Heart right ventricle (tissue), 16 donors: ENCODE measurements at regions of chrX and their contacts with region 1.

Region 1: GRCh38 chrX:39814391-39814790 is 283.4 kb downstream of the BCOR start:
- DNase-seq: no peak
- ATAC-seq: peak in 5 of 8 donors; percentile 38 to 57 (median 41)
- H3K4me3 ChIP-seq: no peak overlapping the region
- H3K27ac ChIP-seq: peak overlapping the region in 7 of 10 donors; percentile 22 to 68 (median 39)
- H3K4me1 ChIP-seq: peaks cover 0 to 17% (median 10%) of the 10 kb centered on the region in 9 donors
- H3K27me3 ChIP-seq: peaks cover 0 to 30% (median 0%) of the 10 kb centered on the region in 7 donors
- CTCF ChIP-seq: peak; percentile 18 to 60 (median 51)

Region 2: DNA sequence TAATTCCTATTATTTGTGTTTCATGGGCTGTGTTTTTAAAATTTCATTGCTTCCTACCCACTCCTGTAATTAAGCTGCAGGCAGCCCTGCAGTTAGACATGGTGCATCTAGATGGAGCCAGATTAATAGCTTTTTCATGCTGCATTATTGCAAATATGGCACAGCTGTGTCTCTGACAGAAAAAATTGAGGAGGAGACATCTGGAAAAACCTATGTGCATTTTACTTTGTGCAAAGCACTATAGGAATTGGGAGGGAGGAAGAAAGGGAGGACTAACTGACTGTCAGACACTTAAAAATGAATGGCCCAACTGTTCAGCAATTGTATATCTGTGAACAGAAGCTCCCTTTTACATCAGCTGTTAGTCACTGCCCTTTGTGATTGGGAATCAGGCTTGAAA is 1479.0 kb before region 1 on chrX:
- intact Hi-C with region 1: no loop called
- DNase-seq: no peak
- ATAC-seq: no peak
- H3K4me3 ChIP-seq: no peak overlapping the region
- H3K27ac ChIP-seq: no peak overlapping the region
- H3K4me1 ChIP-seq: peaks cover 0 to 8% (median 0%) of the 10 kb centered on the region in 9 donors
- H3K27me3 ChIP-seq: peaks cover 0 to 7% (median 0%) of the 10 kb centered on the region in 7 donors
- CTCF ChIP-seq: peak in 8 of 9 donors; percentile 16 to 53 (median 28)

Region 3: GRCh38 chrX:39682764-39683163 is 131.6 kb before region 1 on chrX:
- intact Hi-C with region 1: no loop called
- DNase-seq: no peak
- ATAC-seq: no peak
- H3K4me3 ChIP-seq: no peak overlapping the region
- H3K27ac ChIP-seq: no peak overlapping the region
- H3K4me1 ChIP-seq: peaks cover 0 to 15% (median 5%) of the 10 kb centered on the region in 9 donors
- H3K27me3 ChIP-seq: peaks cover 0 to 29% (median 0%) of the 10 kb centered on the region in 7 donors
- CTCF ChIP-seq: no peak

Region 4: GRCh38 chrX:39705299-39705698 is 109.1 kb before region 1 on chrX:
- intact Hi-C with region 1: no loop called
- DNase-seq: peak; percentile 52 to 67
- ATAC-seq: peak; percentile 51 to 97 (median 87)
- H3K4me3 ChIP-seq: no peak overlapping the region
- H3K27ac ChIP-seq: no peak overlapping the region
- H3K4me1 ChIP-seq: peaks cover 0 to 8% (median 0%) of the 10 kb centered on the region in 9 donors
- H3K27me3 ChIP-seq: peaks cover 0 to 18% (median 0%) of the 10 kb centered on the region in 7 donors
- CTCF ChIP-seq: peak in 7 of 9 donors; percentile 20 to 51 (median 46)

Region 5: GRCh38 chrX:39730662-39731397 is 83.6 kb before region 1 on chrX:
- intact Hi-C with region 1: loop called in 6 of 10 experiments (anchors 2 to 10 kb)
- DNase-seq: peak; percentile 59 to 67
- ATAC-seq: peak; percentile 67 to 86 (median 83)
- H3K4me3 ChIP-seq: no peak overlapping the region
- H3K27ac ChIP-seq: peak overlapping the region in 3 of 10 donors; percentile 22 to 47 (median 25)
- H3K4me1 ChIP-seq: peaks cover 0 to 44% (median 19%) of the 10 kb centered on the region in 9 donors
- H3K27me3 ChIP-seq: peaks cover 0 to 36% (median 0%) of the 10 kb centered on the region in 7 donors
- CTCF ChIP-seq: peak; percentile 15 to 71 (median 61)

Region 6: DNA sequence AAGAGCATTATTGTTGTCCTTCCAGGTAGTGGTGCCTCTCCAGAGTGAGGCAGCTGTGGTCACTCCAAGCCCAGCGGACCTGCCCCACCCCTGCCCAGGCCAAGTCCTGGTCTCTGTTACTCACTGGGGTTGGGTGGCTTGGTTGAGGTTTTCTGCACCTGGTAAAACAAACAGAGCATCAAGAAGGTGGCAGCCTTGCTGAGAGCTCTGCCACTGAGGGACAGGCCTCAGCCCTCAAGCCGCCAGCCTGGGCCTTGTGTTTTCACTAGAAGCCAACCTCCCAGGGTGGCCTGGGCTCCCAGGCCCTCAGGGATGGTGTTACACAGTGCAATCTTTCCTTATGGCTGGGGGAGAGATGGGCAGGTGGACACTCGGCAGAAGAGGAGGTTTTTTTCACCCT is 100.7 kb after region 1 on chrX:
- intact Hi-C with region 1: no loop called
- DNase-seq: no peak
- ATAC-seq: no peak
- H3K4me3 ChIP-seq: no peak overlapping the region
- H3K27ac ChIP-seq: no peak overlapping the region
- H3K4me1 ChIP-seq: peaks cover 0 to 3% (median 0%) of the 10 kb centered on the region in 9 donors
- H3K27me3 ChIP-seq: peaks cover 0 to 6% (median 0%) of the 10 kb centered on the region in 7 donors
- CTCF ChIP-seq: no peak

Region 7: GRCh38 chrX:40006106-40007017 is 192.0 kb after region 1 on chrX:
- intact Hi-C with region 1: loop called in 4 of 10 experiments (anchors 5 to 10 kb)
- DNase-seq: peak; percentile 29 to 74
- ATAC-seq: peak; percentile 50 to 81 (median 74)
- H3K4me3 ChIP-seq: peak overlapping the region in 8 of 10 donors; percentile 0 to 39 (median 27)
- H3K27ac ChIP-seq: peak overlapping the region in 4 of 10 donors; percentile 48 to 64 (median 52)
- H3K4me1 ChIP-seq: peaks cover 0 to 44% (median 19%) of the 10 kb centered on the region in 9 donors
- H3K27me3 ChIP-seq: peaks cover 0 to 87% (median 0%) of the 10 kb centered on the region in 7 donors
- CTCF ChIP-seq: no peak

Region 8: GRCh38 chrX:40108959-40109287 is 294.5 kb after region 1 on chrX:
- intact Hi-C with region 1: loop called in 1 of 10 experiments (anchors 10 kb)
- DNase-seq: peak; percentile 74 to 84
- ATAC-seq: peak; percentile 60 to 82 (median 68)
- H3K4me3 ChIP-seq: peak overlapping the region; percentile 28 to 75 (median 59)
- H3K27ac ChIP-seq: peak overlapping the region; percentile 84 to 96 (median 93)
- H3K4me1 ChIP-seq: peaks cover 2 to 44% (median 34%) of the 10 kb centered on the region in 9 donors
- H3K27me3 ChIP-seq: peaks cover 0 to 73% (median 0%) of the 10 kb centered on the region in 7 donors
- CTCF ChIP-seq: no peak

Region 9: DNA sequence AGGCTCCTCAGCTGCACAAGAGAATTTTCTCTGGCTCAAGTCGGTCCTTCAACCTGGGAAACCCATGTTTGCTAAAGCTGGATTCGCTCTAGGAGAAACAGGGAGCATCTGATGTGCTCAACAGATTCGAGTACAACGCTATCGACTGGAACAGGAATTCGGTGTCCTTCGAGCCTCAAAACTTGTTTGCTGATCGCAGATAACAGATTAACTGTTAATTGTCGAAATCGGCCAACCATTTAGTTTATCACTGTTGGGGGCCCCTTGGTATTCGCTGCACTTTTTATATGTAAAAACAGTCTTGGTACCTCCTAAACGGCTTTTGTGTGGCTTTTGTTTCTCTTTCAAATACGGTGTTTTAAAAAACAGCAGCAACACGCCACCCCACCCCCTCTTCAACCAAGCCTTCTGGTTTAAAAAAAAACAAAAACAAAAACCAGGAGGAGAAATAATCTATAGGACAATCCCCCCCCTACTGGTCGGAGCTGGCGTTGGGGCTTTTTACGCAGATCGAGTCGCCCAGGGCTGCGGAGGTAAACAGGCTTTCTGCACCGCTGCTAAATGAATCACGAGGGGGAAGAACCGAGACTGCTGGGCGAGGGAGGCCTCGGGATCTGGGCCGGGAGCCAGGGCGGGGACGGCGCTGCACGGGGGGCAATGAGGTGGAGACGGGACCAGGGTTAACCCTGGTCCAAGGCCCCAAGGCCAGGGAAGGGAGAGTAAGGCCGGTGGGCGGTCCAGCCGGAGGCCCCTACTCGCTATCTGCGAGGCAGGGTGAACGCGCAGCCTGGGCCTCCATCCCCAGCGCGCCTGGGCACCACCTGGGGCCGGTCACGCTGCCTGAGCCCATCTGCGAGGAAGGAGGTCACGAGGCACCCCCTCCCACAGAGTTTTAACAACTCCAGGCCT is 355.1 kb after region 1 on chrX:
- intact Hi-C with region 1: loop called in 4 of 10 experiments (anchors 5 to 10 kb)
- DNase-seq: no peak
- ATAC-seq: no peak
- H3K4me3 ChIP-seq: peak overlapping the region in 2 of 10 donors; percentile 8 to 19
- H3K27ac ChIP-seq: peak overlapping the region in 1 of 10 donors; percentile 93
- H3K4me1 ChIP-seq: peaks cover 0 to 71% (median 35%) of the 10 kb centered on the region in 9 donors
- H3K27me3 ChIP-seq: peaks cover 0 to 97% (median 0%) of the 10 kb centered on the region in 7 donors
- CTCF ChIP-seq: peak in 5 of 9 donors; percentile 13 to 47 (median 18)

Region 10: GRCh38 chrX:40266490-40267333 is 452.3 kb after region 1 on chrX:
- intact Hi-C with region 1: loop called in 4 of 10 experiments (anchors 5 to 10 kb)
- DNase-seq: peak; percentile 64 to 70
- ATAC-seq: peak; percentile 85 to 95 (median 92)
- H3K4me3 ChIP-seq: peak overlapping the region; percentile 25 to 61 (median 52)
- H3K27ac ChIP-seq: peak overlapping the region in 9 of 10 donors; percentile 65 to 83 (median 77)
- H3K4me1 ChIP-seq: peaks cover 0 to 39% (median 8%) of the 10 kb centered on the region in 9 donors
- H3K27me3 ChIP-seq: peaks cover 0 to 32% (median 0%) of the 10 kb centered on the region in 7 donors
- CTCF ChIP-seq: peak; percentile 38 to 81 (median 63)